GM12878 (cell line): ENCODE measurements at regions of chr17 and their contacts with region 1.

Region 1: GRCh38 chr17:21001813-21002221 is 41.0 kb downstream of the USP22 start:
- DNase-seq: no peak
- ATAC-seq: no peak
- H3K4me3 ChIP-seq: no peak overlapping the region
- H3K27ac ChIP-seq: no peak overlapping the region
- H3K4me1 ChIP-seq: no peaks in the 10 kb centered on the region
- H3K27me3 ChIP-seq: no peaks in the 10 kb centered on the region
- CTCF ChIP-seq: no peak
- EP300 ChIP-seq: no peak
- POLR2A ChIP-seq: no peak
- RAD21 ChIP-seq: no peak

Region 2: GRCh38 chr17:20975566-20975965 is 26.3 kb before region 1 on chr17:
- CTCF ChIA-PET with region 1: no interaction called
- POLR2A ChIA-PET with region 1: no interaction called
- RAD21 ChIA-PET with region 1: no interaction called
- SMC1A ChIA-PET with region 1: no interaction called
- in situ Hi-C with region 1: no loop called
- intact Hi-C with region 1: no loop called
- DNase-seq: no peak
- ATAC-seq: no peak
- H3K4me3 ChIP-seq: no peak overlapping the region
- H3K27ac ChIP-seq: no peak overlapping the region
- H3K4me1 ChIP-seq: peaks cover 3% of the 10 kb centered on the region; the same call in 1 of the 2 replicates
- H3K27me3 ChIP-seq: no peaks in the 10 kb centered on the region; a peak in 1 of 4 replicates
- CTCF ChIP-seq: no peak
- EP300 ChIP-seq: no peak
- POLR2A ChIP-seq: no peak
- RAD21 ChIP-seq: no peak

Region 3: DNA sequence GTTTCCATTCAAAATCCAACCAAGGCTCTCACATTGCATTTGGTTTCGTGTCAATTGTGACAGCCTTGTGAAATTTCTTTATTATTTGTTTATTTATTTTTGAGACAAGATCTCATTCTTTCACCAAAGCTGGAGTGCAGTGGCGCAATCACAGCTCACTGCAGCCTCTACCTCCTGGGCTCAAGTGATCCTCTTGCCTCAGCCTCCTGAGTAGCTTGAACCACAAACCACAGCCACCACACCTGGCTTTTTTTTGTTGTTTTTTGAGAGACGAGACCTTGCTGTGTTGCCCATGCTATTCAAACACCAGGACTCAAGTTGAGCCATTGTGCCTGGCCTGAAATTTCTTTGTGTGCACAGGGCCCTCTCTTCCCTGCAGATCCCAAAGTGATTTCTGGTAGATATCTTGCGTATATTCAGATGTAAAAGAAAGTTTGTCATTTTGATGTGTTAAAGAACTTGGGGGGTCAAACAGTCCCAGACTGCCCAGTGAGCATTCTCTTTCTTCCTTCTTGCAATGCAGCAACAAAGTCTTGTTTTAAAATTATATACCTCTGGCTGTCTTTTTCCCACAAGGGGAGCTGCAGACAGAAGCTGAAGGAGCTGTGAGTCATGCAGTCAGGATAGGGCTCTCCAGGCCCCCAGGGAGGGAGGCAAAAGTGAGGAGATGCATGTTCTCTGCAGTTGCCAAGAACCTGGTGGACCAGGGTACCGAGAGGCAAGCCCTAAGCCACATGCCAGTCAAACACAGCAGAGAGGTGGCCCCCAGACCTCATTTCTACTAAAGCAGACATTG is 56.5 kb after region 1 on chr17:
- CTCF ChIA-PET with region 1: no interaction called
- POLR2A ChIA-PET with region 1: no interaction called
- RAD21 ChIA-PET with region 1: no interaction called
- SMC1A ChIA-PET with region 1: no interaction called
- in situ Hi-C with region 1: loop called (anchors 5 kb)
- intact Hi-C with region 1: no loop called
- DNase-seq: no peak
- ATAC-seq: no peak
- H3K4me3 ChIP-seq: no peak overlapping the region
- H3K27ac ChIP-seq: no peak overlapping the region
- H3K4me1 ChIP-seq: peaks cover 33% of the 10 kb centered on the region
- H3K27me3 ChIP-seq: no peaks in the 10 kb centered on the region
- CTCF ChIP-seq: no peak
- EP300 ChIP-seq: no peak
- POLR2A ChIP-seq: no peak
- RAD21 ChIP-seq: no peak